ENCODE measurements at regions of chr1 and their contacts with region 1.

Region 1: GRCh38 chr1:168520052-168520751 is 23.6 kb downstream of the XCL2 start:
- DNase-seq: peak; percentile 40
- H3K4me3 Mint-ChIP-seq: peak overlapping the region; percentile 67
- H3K27ac Mint-ChIP-seq: peak overlapping the region; percentile 91
- H3K4me1 Mint-ChIP-seq: peaks cover 53% of the 10 kb centered on the region
- H3K27me3 Mint-ChIP-seq: no peaks in the 10 kb centered on the region

Region 2: DNA sequence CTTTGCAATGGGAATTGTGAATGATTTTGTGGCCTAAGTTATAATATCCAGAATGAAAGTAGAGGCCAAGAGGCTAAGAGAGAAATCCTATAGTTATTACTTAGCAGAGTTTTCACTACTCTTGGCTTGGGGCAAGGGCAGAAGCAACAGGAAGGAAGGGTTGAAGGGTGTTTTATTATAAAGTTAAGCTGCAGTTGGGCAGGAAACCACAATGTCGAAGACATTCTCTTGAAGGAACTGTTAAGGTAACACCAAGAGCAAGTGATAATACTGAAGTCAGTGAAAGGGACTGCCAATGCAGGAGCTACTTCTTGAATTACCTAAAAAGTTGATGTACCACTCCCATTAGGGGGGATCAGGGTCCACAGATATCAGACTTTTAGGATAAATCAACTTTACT is 15.3 kb after region 1 on chr1:
- intact Hi-C with region 1: loop called (anchors 2 kb)
- DNase-seq: no peak
- H3K4me3 Mint-ChIP-seq: peak overlapping the region; percentile 59
- H3K27ac Mint-ChIP-seq: peak overlapping the region; percentile 76
- H3K4me1 Mint-ChIP-seq: peaks cover 41% of the 10 kb centered on the region
- H3K27me3 Mint-ChIP-seq: no peaks in the 10 kb centered on the region

Region 3: DNA sequence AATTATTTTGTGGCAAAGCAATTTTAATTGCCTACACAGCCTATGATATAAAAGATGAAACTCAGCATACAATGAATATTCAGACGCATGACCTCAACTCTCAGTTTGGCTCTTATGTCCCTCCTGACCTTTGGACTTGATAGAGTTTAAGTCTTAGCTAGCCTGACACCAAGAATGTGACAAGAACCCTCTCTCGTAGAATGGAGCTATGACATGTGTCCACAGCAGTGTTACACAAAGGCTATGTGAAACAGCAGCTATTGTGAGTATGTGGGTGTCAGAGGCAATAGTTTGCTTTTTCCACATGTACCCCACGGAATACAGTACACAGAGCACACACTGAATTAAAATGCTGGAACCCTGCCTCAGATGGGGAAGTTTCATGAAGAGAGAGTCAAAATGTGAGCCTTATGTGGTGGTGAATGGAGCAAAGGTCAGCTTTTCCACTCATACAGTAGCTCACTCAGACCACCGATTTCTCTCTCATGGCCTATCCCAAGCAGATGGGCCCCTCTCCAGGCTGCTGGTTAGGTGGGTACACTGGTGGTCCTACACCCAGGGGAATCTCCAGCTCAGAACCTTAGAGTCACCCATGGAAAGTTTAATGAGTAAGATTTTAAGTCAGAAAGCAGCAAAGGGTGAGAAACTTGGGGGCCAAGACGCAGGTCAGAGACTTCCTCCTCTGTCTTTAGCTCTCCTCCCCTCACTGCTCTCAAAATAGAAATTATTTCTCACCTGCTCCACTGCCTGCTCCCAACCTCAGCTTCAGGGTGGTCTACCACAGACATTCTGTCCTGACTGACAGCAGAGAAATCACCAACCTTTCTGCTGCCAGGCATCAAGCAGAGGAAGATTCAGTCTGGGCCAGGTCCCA is 33.7 kb after region 1 on chr1:
- intact Hi-C with region 1: loop called (anchors 2 kb)
- DNase-seq: no peak
- H3K4me3 Mint-ChIP-seq: no peak overlapping the region
- H3K27ac Mint-ChIP-seq: peak overlapping the region; percentile 67
- H3K4me1 Mint-ChIP-seq: peaks cover 45% of the 10 kb centered on the region
- H3K27me3 Mint-ChIP-seq: no peaks in the 10 kb centered on the region

Region 4: GRCh38 chr1:168567007-168567406 is 46.8 kb after region 1 on chr1:
- intact Hi-C with region 1: no loop called
- DNase-seq: no peak
- H3K4me3 Mint-ChIP-seq: no peak overlapping the region
- H3K27ac Mint-ChIP-seq: no peak overlapping the region
- H3K4me1 Mint-ChIP-seq: peaks cover 4% of the 10 kb centered on the region
- H3K27me3 Mint-ChIP-seq: peaks cover 17% of the 10 kb centered on the region